ENCODE measurements at regions of chr6 and their contacts with region 1.

Region 1: GRCh38 chr6:43454696-43455530 is 435 bp downstream of the DLK2 start:
- DNase-seq: peak; percentile 93
- ATAC-seq: peak; percentile 90

Region 2: GRCh38 chr6:43386492-43386891 is 68.4 kb before region 1 on chr6:
- intact Hi-C with region 1: loop called (anchors 5 kb)
- DNase-seq: no peak
- ATAC-seq: no peak

Region 3: DNA sequence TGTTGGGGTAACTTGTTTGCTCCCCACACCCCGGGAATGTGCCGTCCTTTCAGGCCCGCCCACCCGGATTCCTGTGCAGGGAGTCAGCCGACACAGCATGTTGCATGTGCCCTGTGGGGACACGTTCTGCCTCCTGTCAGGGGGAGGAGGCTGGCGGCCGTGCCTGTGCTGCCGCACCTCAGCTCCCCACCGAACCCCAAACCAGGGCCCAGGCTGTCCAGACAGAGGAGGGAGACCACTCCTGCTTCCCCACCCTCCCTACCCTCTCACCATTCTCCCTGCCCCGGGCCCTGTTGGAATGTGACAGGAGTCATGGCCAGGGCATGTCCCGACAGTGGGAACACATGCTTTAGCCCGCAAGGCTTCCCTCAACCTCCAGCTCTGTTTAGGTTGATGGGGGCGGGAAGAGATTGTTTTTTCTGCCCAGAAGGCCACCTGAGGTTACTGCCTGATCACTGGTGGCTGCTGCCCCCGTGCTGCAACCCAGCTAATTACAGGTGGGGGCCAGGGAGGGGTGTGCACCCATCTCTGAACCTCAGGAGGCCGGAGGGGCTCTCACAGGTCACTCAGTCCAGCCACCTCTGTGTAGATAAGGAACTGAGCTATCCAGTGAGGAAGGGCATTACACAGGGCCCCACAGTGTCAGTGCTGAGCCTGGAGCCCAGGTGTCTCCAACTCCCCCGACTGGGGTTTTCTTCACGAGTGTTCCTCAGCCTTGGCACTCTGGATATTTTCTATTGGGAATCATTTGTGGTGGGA is 41.6 kb after region 1 on chr6:
- intact Hi-C with region 1: loop called (anchors 2 kb)
- DNase-seq: no peak
- ATAC-seq: no peak

Region 4: DNA sequence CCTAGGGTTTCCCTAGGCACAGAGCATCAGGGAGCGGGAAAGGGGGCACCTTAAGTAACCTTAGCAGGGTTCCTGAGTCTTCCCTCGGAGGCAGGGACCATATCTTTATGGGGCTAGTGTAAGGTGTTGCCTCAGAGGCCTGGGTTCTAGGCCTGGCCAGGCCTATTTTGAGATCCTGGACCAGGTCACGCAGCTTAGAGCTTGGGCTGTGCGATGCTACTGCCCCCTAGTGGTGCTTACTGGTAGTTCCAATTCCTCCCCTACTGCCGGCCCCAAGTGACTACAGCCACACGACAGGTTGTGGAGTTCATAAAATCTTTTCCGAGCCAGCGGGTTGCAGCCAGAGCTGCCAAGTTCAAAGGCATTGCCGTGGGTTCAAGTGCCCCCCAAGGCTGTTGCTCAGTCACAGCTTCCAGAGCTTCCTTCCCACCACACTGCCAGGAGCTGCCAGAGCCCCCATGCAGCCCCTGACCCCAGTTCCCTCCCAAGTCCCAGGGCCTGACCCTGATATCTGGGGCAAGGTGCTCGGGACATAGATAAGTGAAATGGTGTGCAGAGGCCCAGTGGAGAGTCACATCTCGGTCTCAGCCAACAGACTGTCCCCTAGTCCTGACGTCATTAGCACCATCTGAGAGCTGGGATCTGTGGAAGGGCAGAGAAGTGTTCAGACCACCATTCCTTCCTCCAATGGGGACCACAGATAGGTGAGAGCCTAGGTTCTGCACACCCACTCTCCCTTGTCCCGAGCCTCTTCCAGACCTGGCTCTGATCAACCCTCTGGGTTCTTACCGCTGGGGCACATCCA is 52.0 kb after region 1 on chr6:
- intact Hi-C with region 1: loop called (anchors 1 kb)
- DNase-seq: no peak
- ATAC-seq: peak; percentile 48

Region 5: GRCh38 chr6:43817192-43817591 is 362.3 kb after region 1 on chr6:
- intact Hi-C with region 1: no loop called
- DNase-seq: no peak
- ATAC-seq: peak; percentile 95

Region 6: DNA sequence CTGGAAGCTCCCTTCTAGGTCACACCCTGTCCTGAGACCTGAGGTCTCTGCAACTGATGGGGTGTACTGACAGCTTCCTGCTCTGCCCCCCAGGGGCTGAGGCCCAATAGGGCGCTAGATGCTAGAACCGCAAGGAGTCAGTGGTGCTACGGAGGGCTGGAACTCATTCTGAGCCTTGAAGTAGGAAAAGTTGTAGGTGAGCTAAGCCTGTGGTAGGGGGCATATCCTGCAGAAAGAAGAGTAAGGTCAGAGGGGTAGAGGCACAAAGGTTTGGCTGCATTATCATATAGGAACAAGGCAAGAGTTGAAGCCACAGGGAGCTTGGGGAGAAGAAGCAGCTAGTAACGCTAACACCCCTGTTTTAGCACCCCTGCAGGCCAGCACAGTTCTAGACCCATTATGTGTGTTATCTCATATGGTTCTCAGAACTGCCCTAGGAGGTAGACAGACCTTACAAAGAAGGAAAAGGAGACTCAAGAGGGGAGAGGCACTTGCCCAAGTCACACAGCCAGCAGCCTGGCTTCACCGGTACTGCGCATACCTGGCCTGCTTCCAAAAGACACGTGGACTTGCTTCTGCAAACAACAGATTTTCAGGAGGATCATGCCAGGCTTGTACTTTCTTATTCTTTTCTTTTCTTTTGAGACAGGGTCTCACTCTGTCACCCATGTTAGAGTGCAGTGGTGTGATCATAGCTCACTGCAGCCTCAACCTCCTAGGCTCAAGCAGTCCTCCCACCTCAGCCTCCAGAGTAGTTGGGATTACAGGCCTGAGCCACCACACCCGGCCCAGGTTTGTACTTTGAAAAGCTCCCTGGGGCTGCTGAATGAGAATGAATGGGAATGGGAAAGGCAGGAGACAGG is 516.2 kb after region 1 on chr6:
- intact Hi-C with region 1: no loop called
- DNase-seq: no peak
- ATAC-seq: no peak

Measured in Right ventricle myocardium inferior (tissue), 1 donor.